Mammary epithelial cell (primary cell): ENCODE measurements at regions of chr6 and their contacts with region 1.

Region 1: DNA sequence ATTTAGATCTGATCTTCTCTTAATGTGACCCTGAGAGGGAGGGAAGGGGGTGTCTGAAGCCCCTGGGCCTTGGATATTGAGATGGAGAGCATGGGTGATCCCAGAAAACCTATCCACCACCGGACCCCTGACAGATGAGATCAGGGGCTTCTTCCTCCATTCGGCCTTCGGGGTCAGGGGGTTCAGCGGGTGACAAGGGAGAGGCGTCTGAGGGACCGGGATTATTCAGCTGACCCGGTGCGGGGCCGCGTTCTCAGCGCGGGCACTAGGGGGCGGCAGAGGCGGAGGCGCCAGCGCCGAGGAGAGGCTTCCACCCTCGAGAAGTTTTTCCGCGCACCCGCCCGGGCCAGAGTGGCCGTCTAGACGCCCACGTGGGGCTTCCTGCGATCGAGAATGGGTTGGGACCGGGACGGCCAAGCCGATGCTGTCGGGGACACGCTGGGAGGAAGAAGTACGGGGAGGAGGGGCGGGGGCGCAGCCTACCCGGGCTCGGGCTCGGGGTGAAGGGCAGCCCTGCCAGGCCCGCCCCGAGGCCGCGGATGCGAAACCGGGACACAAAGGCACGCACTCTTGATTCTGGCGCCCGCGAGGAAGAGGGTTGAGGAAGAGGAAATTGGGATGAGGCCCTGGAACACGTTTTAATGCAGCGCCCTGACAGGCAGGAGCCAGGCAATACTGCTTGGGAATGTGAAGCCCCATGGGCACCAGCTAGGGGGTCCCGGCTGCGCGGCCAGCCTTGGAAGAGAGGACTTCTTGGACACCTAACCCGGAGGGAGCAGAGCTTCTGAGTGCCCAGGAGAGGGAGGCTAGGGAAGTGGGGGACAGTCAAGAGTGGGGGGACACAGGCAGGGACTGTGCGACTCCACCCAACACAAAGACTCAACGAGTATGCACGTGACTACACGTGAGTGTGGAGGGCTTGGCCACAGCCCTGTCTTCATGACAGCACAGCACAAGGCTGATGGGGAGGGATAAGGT is 30.6 kb downstream of the COL11A2 start:
- DNase-seq: peak; percentile 42
- H3K4me3 ChIP-seq: peak overlapping the region; percentile 22 to 64 (median 44)
- H3K27ac ChIP-seq: no peak overlapping the region
- H3K4me1 ChIP-seq: peaks cover 6% of the 10 kb centered on the region
- H3K27me3 ChIP-seq: no peaks in the 10 kb centered on the region
- CTCF ChIP-seq: peak; percentile 75 to 97

Region 2: GRCh38 chr6:33207552-33208090 is 46.0 kb after region 1 on chr6:
- CTCF ChIA-PET with region 1: interaction called, 17 read pairs
- dilution Hi-C with region 1: no loop called
- in situ Hi-C with region 1: no loop called
- intact Hi-C with region 1: no loop called
- DNase-seq: peak; percentile 39
- H3K4me3 ChIP-seq: peak overlapping the region; percentile 81 to 98 (median 91)
- H3K27ac ChIP-seq: peak overlapping the region; percentile 85
- H3K4me1 ChIP-seq: peaks cover 26% of the 10 kb centered on the region
- H3K27me3 ChIP-seq: no peaks in the 10 kb centered on the region
- CTCF ChIP-seq: no peak

Region 3: DNA sequence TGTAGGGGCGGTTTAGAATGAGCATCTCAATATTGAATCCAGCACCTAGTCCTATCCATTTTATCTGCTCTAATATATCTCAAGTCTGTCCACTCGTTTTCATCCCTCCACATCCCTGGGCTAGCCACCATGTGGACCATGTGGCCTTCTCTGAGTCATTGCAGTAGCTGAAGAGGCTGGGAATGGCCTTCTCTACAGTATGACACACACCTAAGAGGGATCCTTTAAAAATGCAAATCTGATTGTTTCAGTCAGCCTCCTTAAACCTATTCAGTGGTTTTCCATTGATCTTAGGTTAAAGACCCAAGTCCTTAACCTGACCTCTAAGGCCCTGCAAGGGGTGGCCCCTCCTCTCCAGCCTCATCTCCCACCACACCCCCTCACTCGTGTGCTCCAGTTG is 56.0 kb after region 1 on chr6:
- CTCF ChIA-PET with region 1: no interaction called
- dilution Hi-C with region 1: no loop called
- in situ Hi-C with region 1: no loop called
- intact Hi-C with region 1: no loop called
- DNase-seq: peak; percentile 30
- H3K4me3 ChIP-seq: no peak overlapping the region
- H3K27ac ChIP-seq: no peak overlapping the region
- H3K4me1 ChIP-seq: peaks cover 9% of the 10 kb centered on the region
- H3K27me3 ChIP-seq: peaks cover 5% of the 10 kb centered on the region
- CTCF ChIP-seq: no peak